ENCODE measurements at regions of chr2 and their contacts with region 1.

Region 1: GRCh38 chr2:165203689-165204559 is at the start of gene SCN3A:
- DNase-seq: peak in 1 of 3 donors; percentile 35
- ATAC-seq: no peak
- H3K4me3 ChIP-seq: peak within 1 kb of the TSS; percentile 25
- H3K27ac ChIP-seq: no peak within 1 kb of the TSS
- H3K4me1 ChIP-seq: no peaks in the 10 kb centered on the region
- H3K27me3 ChIP-seq: no peaks in the 10 kb centered on the region
- total RNA-seq, gene SCN3A: 0.26 to 0.85 (median 0.50) TPM

Region 2: GRCh38 chr2:165015052-165015642 is 188.8 kb before region 1 on chr2:
- intact Hi-C with region 1: loop called (anchors 5 kb)
- DNase-seq: peak; percentile 58 to 80 (median 73)
- ATAC-seq: peak; percentile 66 to 69
- H3K4me3 ChIP-seq: no peak overlapping the region
- H3K27ac ChIP-seq: no peak overlapping the region
- H3K4me1 ChIP-seq: no peaks in the 10 kb centered on the region
- H3K27me3 ChIP-seq: no peaks in the 10 kb centered on the region

Measured in right cardiac atrium (tissue), 5 donors.